ENCODE measurements at regions of chr5 and their contacts with region 1.

Region 1: GRCh38 chr5:151523335-151523734 is 67.8 kb downstream of the FAT2 start:
- DNase-seq: peak in 4 of 7 donors; percentile 27 to 67 (median 34)
- H3K4me3 ChIP-seq: no peak overlapping the region
- H3K27ac ChIP-seq: no peak overlapping the region
- H3K4me1 ChIP-seq: no peaks in the 10 kb centered on the region
- H3K27me3 ChIP-seq: no peaks in the 10 kb centered on the region
- CTCF ChIP-seq: peak; percentile 16 to 57 (median 52)
- POLR2A ChIP-seq: no peak

Region 2: DNA sequence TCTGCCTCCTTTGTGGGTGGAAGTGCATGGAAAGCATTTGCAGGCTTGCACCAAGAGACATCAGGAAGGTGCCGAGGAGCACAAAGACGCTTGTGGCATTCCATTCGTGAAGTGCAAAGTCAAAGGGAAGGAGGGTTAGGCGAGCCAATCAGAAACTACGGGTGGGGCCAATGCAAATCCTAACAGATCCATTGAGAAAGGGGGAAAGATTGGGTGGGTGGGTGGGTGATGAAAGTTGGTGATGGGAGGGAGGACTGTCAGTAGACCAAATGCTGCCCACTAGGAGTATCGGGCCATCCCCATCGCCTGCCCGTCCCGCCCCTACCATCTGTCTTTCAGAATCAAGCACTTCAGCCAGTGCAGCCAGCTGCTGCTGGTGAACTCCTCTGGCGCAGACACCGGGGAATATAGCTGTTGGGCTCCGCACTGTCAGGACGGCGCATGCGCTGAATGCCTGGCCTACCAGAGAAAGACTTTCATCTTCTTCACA is 348.7 kb before region 1 on chr5:
- intact Hi-C with region 1: no loop called
- DNase-seq: peak in 6 of 7 donors; percentile 30 to 76 (median 52)
- H3K4me3 ChIP-seq: no peak overlapping the region
- H3K27ac ChIP-seq: peak overlapping the region in 1 of 5 donors; percentile 31
- H3K4me1 ChIP-seq: no peaks in the 10 kb centered on the region
- H3K27me3 ChIP-seq: no peaks in the 10 kb centered on the region
- CTCF ChIP-seq: no peak
- POLR2A ChIP-seq: no peak

Region 3: GRCh38 chr5:151451626-151452520 is 71.5 kb before region 1 on chr5:
- intact Hi-C with region 1: no loop called
- DNase-seq: no peak
- H3K4me3 ChIP-seq: no peak overlapping the region
- H3K27ac ChIP-seq: no peak overlapping the region
- H3K4me1 ChIP-seq: peaks cover 0 to 25% of the 10 kb centered on the region in 2 donors
- H3K27me3 ChIP-seq: no peaks in the 10 kb centered on the region
- CTCF ChIP-seq: no peak
- POLR2A ChIP-seq: no peak

Region 4: GRCh38 chr5:151628112-151628823 is 104.9 kb after region 1 on chr5:
- intact Hi-C with region 1: loop called in 1 of 2 experiments (anchors 10 kb)
- DNase-seq: no peak
- H3K4me3 ChIP-seq: no peak overlapping the region
- H3K27ac ChIP-seq: no peak overlapping the region
- H3K4me1 ChIP-seq: no peaks in the 10 kb centered on the region
- H3K27me3 ChIP-seq: no peaks in the 10 kb centered on the region
- CTCF ChIP-seq: peak in 1 of 6 experiments; percentile 7
- POLR2A ChIP-seq: no peak